Activated CD8-positive, alpha-beta T cell treated with anti-CD3 and anti-CD28 coated beads for 36 hours (primary cell): ENCODE measurements at regions of chr1 and their contacts with region 1.

Region 1: GRCh38 chr1:66436378-66437145 is 97.4 kb upstream of the SGIP1 start:
- DNase-seq: peak; percentile 87
- ATAC-seq: peak; percentile 95
- H3K4me3 Mint-ChIP-seq: no peak overlapping the region
- H3K27ac Mint-ChIP-seq: peak overlapping the region; percentile 52
- H3K4me1 Mint-ChIP-seq: peaks cover 41% of the 10 kb centered on the region
- H3K27me3 Mint-ChIP-seq: no peaks in the 10 kb centered on the region
- CTCF ChIP-seq: peak; percentile 81

Region 2: GRCh38 chr1:66253330-66253921 is 183.1 kb before region 1 on chr1:
- CTCF ChIA-PET with region 1: interaction called, 512 read pairs
- POLR2A ChIA-PET with region 1: no interaction called
- intact Hi-C with region 1: no loop called
- DNase-seq: no peak
- ATAC-seq: peak; percentile 89
- H3K4me3 Mint-ChIP-seq: no peak overlapping the region
- H3K27ac Mint-ChIP-seq: no peak overlapping the region
- H3K4me1 Mint-ChIP-seq: peaks cover 46% of the 10 kb centered on the region
- H3K27me3 Mint-ChIP-seq: peaks cover 1% of the 10 kb centered on the region
- CTCF ChIP-seq: peak; percentile 83

Region 3: GRCh38 chr1:66271216-66271903 is 165.2 kb before region 1 on chr1:
- CTCF ChIA-PET with region 1: interaction called, 7 read pairs
- POLR2A ChIA-PET with region 1: interaction called, 3 read pairs
- intact Hi-C with region 1: loop called (anchors 5 kb)
- DNase-seq: peak; percentile 80
- ATAC-seq: peak; percentile 63
- H3K4me3 Mint-ChIP-seq: no peak overlapping the region
- H3K27ac Mint-ChIP-seq: peak overlapping the region; percentile 86
- H3K4me1 Mint-ChIP-seq: peaks cover 65% of the 10 kb centered on the region
- H3K27me3 Mint-ChIP-seq: no peaks in the 10 kb centered on the region
- CTCF ChIP-seq: no peak

Region 4: DNA sequence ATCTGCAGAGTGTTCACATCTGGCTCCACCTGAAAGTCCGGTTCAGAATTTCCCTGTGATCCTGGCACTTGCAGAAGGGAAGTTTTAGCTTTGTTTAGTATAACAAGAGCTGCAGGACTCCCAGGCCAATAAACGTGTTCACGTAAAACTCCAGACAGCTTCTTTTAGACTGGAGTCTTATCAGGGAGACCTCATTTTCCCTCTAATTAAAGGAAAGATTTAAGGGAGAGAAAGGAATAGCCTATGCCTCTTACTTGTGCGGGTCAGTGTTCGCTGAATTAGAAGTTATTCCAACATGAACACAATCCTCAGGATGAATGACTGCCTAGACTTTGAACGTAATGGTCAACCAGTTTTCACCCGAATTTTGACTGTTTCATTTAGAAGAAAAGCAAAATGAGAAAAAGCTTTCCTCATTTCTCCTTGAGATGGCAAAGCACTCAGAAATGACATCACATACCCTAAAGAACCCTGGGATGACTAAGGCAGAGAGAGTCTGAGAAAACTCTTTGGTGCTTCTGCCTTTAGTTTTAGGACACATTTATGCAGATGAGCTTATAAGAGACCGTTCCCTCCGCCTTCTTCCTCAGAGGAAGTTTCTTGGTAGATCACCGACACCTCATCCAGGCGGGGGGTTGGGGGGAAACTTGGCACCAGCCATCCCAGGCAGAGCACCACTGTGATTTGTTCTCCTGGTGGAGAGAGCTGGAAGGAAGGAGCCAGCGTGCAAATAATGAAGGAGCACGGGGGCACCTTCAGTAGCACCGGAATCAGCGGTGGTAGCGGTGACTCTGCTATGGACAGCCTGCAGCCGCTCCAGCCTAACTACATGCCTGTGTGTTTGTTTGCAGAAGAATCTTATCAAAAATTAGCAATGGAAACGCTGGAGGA is 104.7 kb before region 1 on chr1:
- CTCF ChIA-PET with region 1: interaction called, 27 read pairs
- POLR2A ChIA-PET with region 1: interaction called, 3 read pairs
- intact Hi-C with region 1: no loop called
- DNase-seq: peak; percentile 70
- ATAC-seq: peak; percentile 16
- H3K4me3 Mint-ChIP-seq: peak overlapping the region; percentile 99
- H3K27ac Mint-ChIP-seq: peak overlapping the region; percentile 98
- H3K4me1 Mint-ChIP-seq: peaks cover 48% of the 10 kb centered on the region
- H3K27me3 Mint-ChIP-seq: no peaks in the 10 kb centered on the region
- CTCF ChIP-seq: no peak

Region 5: DNA sequence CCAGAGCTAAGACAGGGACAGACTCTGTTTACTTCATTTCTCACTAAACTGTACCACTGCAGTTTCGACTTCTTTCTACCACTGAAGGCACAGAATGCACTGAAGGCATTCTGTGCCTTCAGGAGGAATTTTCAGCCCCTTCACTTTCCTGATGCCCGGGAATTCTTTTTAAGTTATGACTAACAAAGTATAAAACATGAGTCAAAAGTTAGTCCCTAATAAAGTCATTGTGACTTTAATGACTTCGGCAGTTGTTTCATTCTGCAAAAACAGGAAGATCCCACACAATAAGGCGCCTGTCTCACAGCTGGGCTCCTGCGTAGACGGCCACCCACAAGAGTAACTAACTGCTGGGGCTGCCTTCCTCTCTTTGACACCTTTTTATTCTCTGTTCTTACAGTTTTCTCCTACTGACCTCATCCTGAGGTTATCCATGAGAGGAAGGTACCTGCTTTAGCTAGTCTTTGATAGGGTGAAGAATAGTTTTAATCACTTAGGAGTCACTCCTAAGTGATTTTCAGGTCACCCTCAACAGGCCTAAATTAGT is 86.5 kb before region 1 on chr1:
- CTCF ChIA-PET with region 1: interaction called, 22 read pairs
- POLR2A ChIA-PET with region 1: interaction called, 11 read pairs
- intact Hi-C with region 1: loop called (anchors 5 kb)
- DNase-seq: peak; percentile 83
- ATAC-seq: peak; percentile 74
- H3K4me3 Mint-ChIP-seq: peak overlapping the region; percentile 70
- H3K27ac Mint-ChIP-seq: peak overlapping the region; percentile 81
- H3K4me1 Mint-ChIP-seq: peaks cover 96% of the 10 kb centered on the region
- H3K27me3 Mint-ChIP-seq: no peaks in the 10 kb centered on the region
- CTCF ChIP-seq: no peak

Region 6: DNA sequence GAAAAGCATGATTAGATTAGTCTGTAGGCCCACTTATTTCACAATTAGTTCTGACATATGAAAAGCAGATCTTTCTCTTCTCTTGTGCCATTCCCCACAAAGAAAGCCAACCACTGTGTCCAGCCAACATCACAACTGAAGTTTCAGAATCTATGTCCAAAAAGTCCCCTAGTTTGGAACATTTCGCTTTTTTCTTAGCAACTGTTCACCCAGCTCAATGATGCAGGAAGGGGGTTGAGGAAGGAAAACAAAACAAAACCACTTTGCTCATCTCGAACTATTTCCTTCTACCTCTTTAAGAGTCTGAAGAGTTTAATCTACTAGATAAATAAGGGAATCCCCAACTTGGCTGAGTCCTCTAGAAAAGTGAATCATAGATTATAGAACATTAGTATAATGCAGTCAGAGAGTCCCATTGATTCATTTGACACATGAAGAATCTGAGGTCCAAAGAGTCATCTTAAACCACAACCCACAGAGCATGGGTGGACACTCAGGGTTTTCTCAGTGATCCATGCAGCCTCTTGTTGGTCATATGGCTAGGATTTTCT is 61.9 kb before region 1 on chr1:
- CTCF ChIA-PET with region 1: interaction called, 32 read pairs
- POLR2A ChIA-PET with region 1: interaction called, 11 read pairs
- intact Hi-C with region 1: loop called (anchors 1 kb)
- DNase-seq: peak; percentile 76
- ATAC-seq: peak; percentile 75
- H3K4me3 Mint-ChIP-seq: peak overlapping the region; percentile 60
- H3K27ac Mint-ChIP-seq: peak overlapping the region; percentile 93
- H3K4me1 Mint-ChIP-seq: peaks cover 75% of the 10 kb centered on the region
- H3K27me3 Mint-ChIP-seq: no peaks in the 10 kb centered on the region
- CTCF ChIP-seq: no peak

Region 7: GRCh38 chr1:66402194-66402593 is 34.4 kb before region 1 on chr1:
- CTCF ChIA-PET with region 1: interaction called, 20 read pairs
- POLR2A ChIA-PET with region 1: no interaction called
- intact Hi-C with region 1: loop called (anchors 5 kb)
- DNase-seq: no peak
- ATAC-seq: no peak
- H3K4me3 Mint-ChIP-seq: no peak overlapping the region
- H3K27ac Mint-ChIP-seq: no peak overlapping the region
- H3K4me1 Mint-ChIP-seq: peaks cover 34% of the 10 kb centered on the region
- H3K27me3 Mint-ChIP-seq: peaks cover 1% of the 10 kb centered on the region
- CTCF ChIP-seq: no peak